Gastrocnemius medialis (tissue), 4 donors: ENCODE measurements at regions of chr1 and their contacts with region 1.

Region 1: GRCh38 chr1:26035959-26036755 is 9.8 kb downstream of the SLC30A2 start:
- DNase-seq: peak; percentile 96 to 99
- ATAC-seq: peak; percentile 65 to 69
- H3K4me3 ChIP-seq: peak overlapping the region; percentile 77 to 91 (median 86)
- H3K27ac ChIP-seq: peak overlapping the region; percentile 91 to 99 (median 98)
- H3K4me1 ChIP-seq: peaks cover 33% of the 10 kb centered on the region in 2 donors
- H3K27me3 ChIP-seq: no peaks in the 10 kb centered on the region
- CTCF ChIP-seq: peak; percentile 99 to 100 (median 100)
- POLR2A ChIP-seq: peak; percentile 42 to 73

Region 2: DNA sequence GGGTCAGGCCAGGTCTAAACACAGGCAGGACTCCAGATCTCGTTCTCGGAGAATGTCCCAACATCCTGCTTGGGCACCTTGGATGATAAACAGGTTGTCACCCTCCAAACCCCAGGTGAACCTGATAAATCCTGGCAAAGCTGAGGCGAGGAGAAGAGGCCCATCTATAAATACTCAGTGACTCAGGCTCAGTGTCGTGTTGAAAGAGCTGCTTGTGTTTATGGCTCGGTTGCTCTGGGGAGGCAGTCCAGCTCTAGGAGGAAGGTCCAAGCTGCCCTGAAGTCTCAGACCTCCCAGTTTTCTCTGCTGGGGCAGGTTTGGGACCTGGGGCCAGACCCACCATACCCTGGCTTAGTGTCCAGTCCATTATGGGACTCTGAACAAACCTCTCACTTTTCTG is 47.1 kb after region 1 on chr1:
- in situ Hi-C with region 1: no loop called
- intact Hi-C with region 1: loop called (anchors 1 kb)
- DNase-seq: peak; percentile 93 to 96
- ATAC-seq: peak; percentile 76 to 78
- H3K4me3 ChIP-seq: peak overlapping the region in 3 of 4 donors; percentile 14 to 40 (median 39)
- H3K27ac ChIP-seq: peak overlapping the region; percentile 88 to 96 (median 90)
- H3K4me1 ChIP-seq: peaks cover 55 to 60% of the 10 kb centered on the region in 2 donors
- H3K27me3 ChIP-seq: no peaks in the 10 kb centered on the region
- CTCF ChIP-seq: no peak
- POLR2A ChIP-seq: peak; percentile 68 to 81

Region 3: GRCh38 chr1:26111530-26112406 is 75.6 kb after region 1 on chr1 and contains the start of gene PDIK1L:
- in situ Hi-C with region 1: no loop called
- intact Hi-C with region 1: loop called (anchors 5 kb)
- DNase-seq: peak; percentile 85 to 93
- ATAC-seq: peak; percentile 73 to 76
- H3K4me3 ChIP-seq: peak within 1 kb of the TSS; percentile 89 to 96 (median 96)
- H3K27ac ChIP-seq: peak within 1 kb of the TSS; percentile 96 to 98 (median 97)
- H3K4me1 ChIP-seq: peaks cover 42 to 49% of the 10 kb centered on the region in 2 donors
- H3K27me3 ChIP-seq: no peaks in the 10 kb centered on the region
- CTCF ChIP-seq: peak in 1 of 5 experiments; percentile 24
- POLR2A ChIP-seq: peak; percentile 81 to 85
- total RNA-seq, gene PDIK1L: 4.4 to 8.7 (median 5.9) TPM

Region 4: DNA sequence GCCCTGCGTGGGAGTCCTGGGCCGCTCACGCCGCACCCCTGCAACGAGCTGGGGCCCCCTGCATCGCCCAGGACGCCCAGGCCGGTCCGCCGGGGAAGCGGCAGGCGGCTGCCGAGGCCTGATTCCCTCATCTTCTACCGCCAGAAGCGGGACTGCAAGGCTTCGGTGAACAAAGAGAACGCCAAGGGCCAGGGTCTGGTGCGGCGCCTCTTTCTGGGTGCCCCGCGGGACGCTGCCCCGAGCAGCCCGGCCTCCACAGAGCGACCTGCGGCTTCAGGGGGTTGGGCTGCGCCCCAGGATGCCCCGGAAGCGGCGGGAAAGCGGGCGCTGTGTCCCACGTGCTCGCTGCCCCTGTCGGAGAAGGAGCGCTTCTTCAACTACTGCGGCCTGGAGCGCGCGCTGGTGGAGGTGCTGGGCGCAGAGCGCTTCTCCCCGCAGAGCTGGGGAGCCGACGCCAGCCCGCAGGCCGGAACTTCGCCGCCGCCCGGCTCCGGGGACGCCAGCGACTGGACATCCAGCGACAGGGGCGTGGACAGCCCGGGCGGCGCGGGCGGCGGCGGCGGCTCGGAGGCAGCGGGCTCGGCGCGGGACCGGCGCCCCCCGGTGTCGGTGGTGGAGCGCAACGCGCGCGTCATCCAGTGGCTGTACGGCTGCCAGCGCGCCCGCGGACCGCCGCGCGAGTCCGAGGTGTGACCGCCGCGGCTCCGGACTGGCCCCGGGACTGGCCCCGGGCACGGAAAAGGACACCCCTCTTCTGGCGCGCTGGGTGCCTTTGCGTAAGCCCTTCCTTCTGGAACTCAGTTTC is 125.5 kb after region 1 on chr1:
- in situ Hi-C with region 1: loop called in 1 of 4 experiments (anchors 25 kb)
- intact Hi-C with region 1: loop called (anchors 5 kb)
- DNase-seq: peak; percentile 36 to 69
- ATAC-seq: peak; percentile 66 to 78
- H3K4me3 ChIP-seq: peak overlapping the region; percentile 57 to 76 (median 68)
- H3K27ac ChIP-seq: peak overlapping the region; percentile 78 to 87 (median 84)
- H3K4me1 ChIP-seq: peaks cover 7 to 14% of the 10 kb centered on the region in 2 donors
- H3K27me3 ChIP-seq: no peaks in the 10 kb centered on the region
- CTCF ChIP-seq: peak; percentile 20 to 53 (median 36)
- POLR2A ChIP-seq: peak; percentile 68 to 74

Region 5: GRCh38 chr1:26233903-26234643 is 197.9 kb after region 1 on chr1 and contains the start of gene CEP85:
- in situ Hi-C with region 1: no loop called
- intact Hi-C with region 1: loop called (anchors 5 kb)
- DNase-seq: peak; percentile 98 to 99
- ATAC-seq: peak; percentile 91 to 92
- H3K4me3 ChIP-seq: peak within 1 kb of the TSS; percentile 81 to 96 (median 90)
- H3K27ac ChIP-seq: peak within 1 kb of the TSS; percentile 97 to 99 (median 98)
- H3K4me1 ChIP-seq: peaks cover 30 to 40% of the 10 kb centered on the region in 2 donors
- H3K27me3 ChIP-seq: no peaks in the 10 kb centered on the region
- CTCF ChIP-seq: peak; percentile 72 to 90 (median 89)
- POLR2A ChIP-seq: peak; percentile 96 to 97
- total RNA-seq, gene CEP85: 28.5 to 61.6 (median 41.3) TPM